SK-N-SH (cell line): ENCODE measurements at regions of chr12 and their contacts with region 1.

Region 1: DNA sequence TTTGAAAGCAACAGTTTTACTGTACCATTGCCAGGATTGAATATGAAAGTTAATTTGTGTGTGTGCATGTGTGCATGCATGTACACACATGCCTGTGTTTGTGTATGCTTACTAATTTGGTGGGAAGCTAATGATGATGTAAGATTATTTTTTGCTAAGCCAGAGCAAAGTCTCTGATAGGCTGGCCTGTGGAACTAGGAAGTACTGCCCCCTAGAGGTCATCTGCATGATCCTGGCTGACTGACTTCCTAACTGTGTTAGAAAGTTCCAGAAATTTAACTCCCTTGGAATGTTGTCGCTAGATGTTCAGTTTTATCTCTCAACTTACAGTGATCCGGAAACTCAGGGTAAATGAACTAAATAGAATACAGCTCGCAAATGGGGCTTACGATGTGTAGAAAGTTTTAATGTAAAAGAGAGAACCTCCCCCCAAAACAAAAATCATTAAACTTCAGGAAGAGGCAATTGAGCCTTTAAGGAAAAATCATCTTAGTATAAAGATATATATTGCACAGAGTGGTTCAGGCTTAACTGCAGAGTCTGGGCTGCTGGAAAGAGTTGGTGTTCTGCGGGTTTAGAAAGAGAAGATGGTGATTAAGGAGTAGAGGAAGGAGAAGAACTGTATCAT is 34.3 kb upstream of the SLC38A1 start:
- DNase-seq: peak; percentile 54
- H3K4me3 ChIP-seq: no peak overlapping the region; a peak in 1 of 4 replicates
- H3K27ac ChIP-seq: no peak overlapping the region
- H3K4me1 ChIP-seq: no peaks in the 10 kb centered on the region
- H3K27me3 ChIP-seq: no peaks in the 10 kb centered on the region
- CTCF ChIP-seq: peak; percentile 52
- EP300 ChIP-seq: no peak
- RAD21 ChIP-seq: peak; percentile 77

Region 2: DNA sequence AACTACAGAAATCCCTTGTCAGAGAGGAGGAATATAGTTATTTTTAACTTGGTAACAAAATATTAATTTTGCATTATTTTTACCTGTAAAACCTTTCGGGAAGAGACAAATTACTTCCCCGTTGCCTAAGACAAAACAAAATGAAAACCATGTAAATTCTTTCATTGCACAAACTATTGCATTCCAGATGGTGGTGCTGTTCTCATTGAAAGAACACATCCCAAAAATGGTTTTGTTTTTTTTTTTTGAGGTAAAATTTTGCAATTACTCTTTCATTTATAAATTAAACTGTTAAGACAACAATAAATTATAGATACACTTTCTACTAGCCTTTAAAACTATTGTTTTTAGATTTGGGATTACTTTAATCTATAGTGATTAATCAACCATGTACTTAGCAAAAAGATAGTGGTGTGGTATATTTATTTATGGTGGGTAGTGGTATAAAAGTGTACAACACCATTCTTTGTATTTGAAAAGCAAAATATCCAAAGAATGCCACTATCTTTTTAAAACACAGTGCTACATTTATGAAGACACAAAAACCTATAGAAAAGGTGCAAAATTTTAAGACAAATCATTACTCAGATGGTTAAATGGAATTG is 149.8 kb before region 1 on chr12:
- CTCF ChIA-PET with region 1: interaction called, 12 read pairs
- POLR2A ChIA-PET with region 1: no interaction called
- DNase-seq: peak; percentile 20
- H3K4me3 ChIP-seq: peak overlapping the region in 1 of 2 experiments; percentile 41; a peak in 1 of 4 replicates
- H3K27ac ChIP-seq: peak overlapping the region; percentile 85 to 86; a peak in 3 of 4 replicates
- H3K4me1 ChIP-seq: peaks cover 9 to 27% of the 10 kb centered on the region in 2 experiments; a peak in 2 of 4 replicates
- H3K27me3 ChIP-seq: no peaks in the 10 kb centered on the region
- CTCF ChIP-seq: peak; percentile 91
- EP300 ChIP-seq: no peak
- RAD21 ChIP-seq: peak; percentile 79